HEK293 (cell line): ENCODE measurements at regions of chr1 and their contacts with region 1.

Region 1: GRCh38 chr1:145978854-145979759 is 14.6 kb downstream of the POLR3GL start:
- H3K4me3 ChIP-seq: no peak overlapping the region
- H3K27ac ChIP-seq: peak overlapping the region; percentile 60
- H3K4me1 ChIP-seq: peaks cover 6% of the 10 kb centered on the region
- CTCF ChIP-seq: no peak; the same call in 1 of the 2 replicates

Region 2: DNA sequence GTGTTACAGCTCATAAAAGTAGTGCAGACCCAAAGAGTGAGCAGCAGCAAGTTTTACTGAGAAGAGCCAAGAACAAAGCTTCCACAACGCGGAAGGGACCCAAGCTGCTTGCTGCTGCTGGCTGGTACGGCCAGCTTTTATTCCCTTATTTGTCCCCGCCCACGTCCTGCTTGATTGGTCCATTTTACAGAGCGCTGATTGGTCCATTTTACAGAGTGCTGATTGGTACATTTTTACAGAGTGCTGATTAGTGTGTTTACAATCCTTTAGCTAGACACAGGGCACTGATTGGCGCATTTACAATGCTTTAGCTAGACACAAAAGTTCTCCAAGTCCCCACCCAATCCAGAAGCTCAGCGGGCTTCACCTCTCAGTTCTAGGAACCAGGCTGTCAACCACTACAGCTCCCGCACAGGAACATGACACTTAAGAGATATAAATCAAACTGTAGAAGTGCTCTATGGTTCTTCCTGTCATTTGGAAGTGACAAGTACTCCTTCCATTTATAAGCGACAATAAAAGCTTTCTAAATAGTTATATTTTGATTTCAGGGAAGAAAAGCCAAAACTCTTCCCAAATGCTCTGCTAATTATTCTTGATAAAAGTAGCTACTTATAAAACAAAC is 183.7 kb before region 1 on chr1:
- CTCF ChIA-PET with region 1: no interaction called
- POLR2A ChIA-PET with region 1: no interaction called
- H3K4me3 ChIP-seq: no peak overlapping the region
- H3K27ac ChIP-seq: no peak overlapping the region
- H3K4me1 ChIP-seq: no peaks in the 10 kb centered on the region
- CTCF ChIP-seq: no peak

Region 3: GRCh38 chr1:145871994-145872924 is 106.8 kb before region 1 on chr1:
- CTCF ChIA-PET with region 1: no interaction called
- POLR2A ChIA-PET with region 1: no interaction called
- H3K4me3 ChIP-seq: no peak overlapping the region
- H3K27ac ChIP-seq: no peak overlapping the region
- H3K4me1 ChIP-seq: no peaks in the 10 kb centered on the region
- CTCF ChIP-seq: no peak

Region 4: GRCh38 chr1:145957443-145958319 is 21.4 kb before region 1 on chr1 and contains the start of gene LIX1L:
- CTCF ChIA-PET with region 1: interaction called, 6 read pairs
- POLR2A ChIA-PET with region 1: interaction called, 30 read pairs
- H3K4me3 ChIP-seq: peak within 1 kb of the TSS; percentile 81
- H3K27ac ChIP-seq: peak within 1 kb of the TSS; percentile 49; the same call in 1 of the 2 replicates
- H3K4me1 ChIP-seq: peaks cover 10% of the 10 kb centered on the region
- CTCF ChIP-seq: no peak

Region 5: GRCh38 chr1:145990249-145991097 is 11.4 kb after region 1 on chr1:
- CTCF ChIA-PET with region 1: interaction called, 80 read pairs
- POLR2A ChIA-PET with region 1: interaction called, 12 read pairs
- H3K4me3 ChIP-seq: no peak overlapping the region
- H3K27ac ChIP-seq: no peak overlapping the region
- H3K4me1 ChIP-seq: no peaks in the 10 kb centered on the region
- CTCF ChIP-seq: no peak

Region 6: DNA sequence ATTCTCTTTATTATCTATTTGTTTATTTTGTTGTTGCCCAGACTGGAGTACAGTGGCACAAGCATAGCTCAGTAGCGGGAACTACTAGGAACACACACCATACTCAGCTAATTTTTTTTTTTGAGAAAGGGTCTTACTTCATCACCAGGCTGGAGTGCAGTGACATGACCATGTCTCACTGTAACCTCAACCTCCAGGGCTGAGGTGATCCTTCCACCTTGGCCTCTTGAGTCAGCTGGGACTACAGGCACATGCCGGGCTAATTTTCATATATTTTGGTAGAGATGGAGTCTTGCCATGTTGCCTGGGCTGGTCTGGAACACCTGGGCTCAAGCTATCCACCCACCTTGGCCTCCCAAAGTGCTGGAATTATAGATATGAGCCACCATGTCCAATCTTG is 22.6 kb after region 1 on chr1:
- CTCF ChIA-PET with region 1: interaction called, 227 read pairs
- POLR2A ChIA-PET with region 1: interaction called, 12 read pairs
- H3K4me3 ChIP-seq: no peak overlapping the region
- H3K27ac ChIP-seq: no peak overlapping the region
- H3K4me1 ChIP-seq: peaks cover 12% of the 10 kb centered on the region
- CTCF ChIP-seq: no peak

Region 7: GRCh38 chr1:146012737-146013403 is 33.8 kb after region 1 on chr1:
- CTCF ChIA-PET with region 1: interaction called, 227 read pairs
- POLR2A ChIA-PET with region 1: interaction called, 4 read pairs
- H3K4me3 ChIP-seq: no peak overlapping the region
- H3K27ac ChIP-seq: no peak overlapping the region
- H3K4me1 ChIP-seq: no peaks in the 10 kb centered on the region
- CTCF ChIP-seq: peak; percentile 73